ENCODE measurements at regions of chr22 and their contacts with region 1.

Region 1: GRCh38 chr22:30782613-30783012 is 87.9 kb downstream of the OSBP2 start:
- DNase-seq: no peak
- H3K4me3 ChIP-seq: no peak overlapping the region
- H3K27ac ChIP-seq: no peak overlapping the region
- H3K4me1 ChIP-seq: no peaks in the 10 kb centered on the region
- H3K27me3 ChIP-seq: no peaks in the 10 kb centered on the region
- CTCF ChIP-seq: no peak

Region 2: GRCh38 chr22:30469165-30469564 is 313.4 kb before region 1 on chr22:
- CTCF ChIA-PET with region 1: no interaction called
- POLR2A ChIA-PET with region 1: no interaction called
- intact Hi-C with region 1: no loop called
- DNase-seq: no peak
- H3K4me3 ChIP-seq: no peak overlapping the region
- H3K27ac ChIP-seq: no peak overlapping the region
- H3K4me1 ChIP-seq: no peaks in the 10 kb centered on the region
- H3K27me3 ChIP-seq: no peaks in the 10 kb centered on the region
- CTCF ChIP-seq: no peak

Region 3: GRCh38 chr22:30680991-30681770 is 101.4 kb before region 1 on chr22:
- CTCF ChIA-PET with region 1: no interaction called
- POLR2A ChIA-PET with region 1: no interaction called
- intact Hi-C with region 1: no loop called
- DNase-seq: no peak
- H3K4me3 ChIP-seq: no peak overlapping the region
- H3K27ac ChIP-seq: no peak overlapping the region
- H3K4me1 ChIP-seq: no peaks in the 10 kb centered on the region
- H3K27me3 ChIP-seq: peaks cover 5% of the 10 kb centered on the region
- CTCF ChIP-seq: no peak

Region 4: GRCh38 chr22:30717331-30717921 is 65.2 kb before region 1 on chr22:
- CTCF ChIA-PET with region 1: no interaction called
- POLR2A ChIA-PET with region 1: no interaction called
- intact Hi-C with region 1: no loop called
- DNase-seq: peak; percentile 65
- H3K4me3 ChIP-seq: no peak overlapping the region
- H3K27ac ChIP-seq: no peak overlapping the region
- H3K4me1 ChIP-seq: no peaks in the 10 kb centered on the region
- H3K27me3 ChIP-seq: no peaks in the 10 kb centered on the region
- CTCF ChIP-seq: no peak

Region 5: DNA sequence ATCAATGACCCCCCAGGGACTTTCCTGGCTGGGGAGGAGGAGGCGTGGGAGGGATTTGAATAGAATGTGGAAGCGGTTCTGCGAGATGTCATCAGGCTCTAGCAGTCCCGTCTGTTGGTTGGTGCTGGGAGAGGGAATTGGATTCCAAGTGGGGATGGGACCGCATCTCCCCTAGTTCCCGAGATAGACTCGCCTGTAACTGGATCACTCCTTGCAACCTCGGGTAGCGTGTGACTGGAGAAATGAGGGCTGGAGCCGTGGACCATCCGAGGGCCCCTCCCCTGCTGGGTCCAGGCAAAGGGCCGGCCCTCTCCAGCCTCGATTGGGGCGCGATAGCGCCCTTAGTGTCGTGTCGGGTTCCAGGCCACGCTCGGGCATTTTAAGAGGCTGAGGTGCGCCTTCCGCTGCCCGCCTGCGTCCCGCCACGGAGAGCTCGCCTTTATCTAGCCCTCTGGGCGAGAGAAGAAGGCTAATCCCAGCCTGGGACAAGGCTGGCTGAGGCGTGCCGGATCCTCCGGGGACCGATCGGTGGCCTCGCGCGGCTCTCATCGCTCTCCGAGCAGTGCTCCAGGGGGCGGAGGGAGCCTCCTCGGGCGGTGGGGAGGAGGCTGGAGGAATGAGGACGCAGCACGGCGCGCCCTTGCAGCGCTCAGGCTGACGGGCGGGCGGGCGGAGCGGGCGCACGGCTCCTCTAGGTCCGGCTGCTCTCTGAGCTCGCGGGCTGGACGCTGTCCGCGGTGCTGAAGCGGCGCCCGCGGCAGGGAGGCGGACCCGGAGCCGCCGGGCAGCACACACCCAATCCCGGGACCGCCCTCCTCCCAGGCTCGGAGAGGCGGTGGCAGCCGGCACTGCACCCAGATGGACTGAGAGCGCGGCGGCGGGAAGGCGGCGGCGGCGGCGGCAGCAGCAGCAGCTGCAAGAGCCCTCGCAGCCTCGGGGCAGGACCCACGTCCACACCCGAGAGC is 19.9 kb after region 1 on chr22:
- CTCF ChIA-PET with region 1: no interaction called
- POLR2A ChIA-PET with region 1: no interaction called
- intact Hi-C with region 1: no loop called
- DNase-seq: peak; percentile 93
- H3K4me3 ChIP-seq: peak overlapping the region; percentile 24
- H3K27ac ChIP-seq: no peak overlapping the region
- H3K4me1 ChIP-seq: peaks cover 14% of the 10 kb centered on the region
- H3K27me3 ChIP-seq: peaks cover 41% of the 10 kb centered on the region
- CTCF ChIP-seq: 0 out of 2 replicates have a peak, but pooled peaks have one; percentile 22

Region 6: DNA sequence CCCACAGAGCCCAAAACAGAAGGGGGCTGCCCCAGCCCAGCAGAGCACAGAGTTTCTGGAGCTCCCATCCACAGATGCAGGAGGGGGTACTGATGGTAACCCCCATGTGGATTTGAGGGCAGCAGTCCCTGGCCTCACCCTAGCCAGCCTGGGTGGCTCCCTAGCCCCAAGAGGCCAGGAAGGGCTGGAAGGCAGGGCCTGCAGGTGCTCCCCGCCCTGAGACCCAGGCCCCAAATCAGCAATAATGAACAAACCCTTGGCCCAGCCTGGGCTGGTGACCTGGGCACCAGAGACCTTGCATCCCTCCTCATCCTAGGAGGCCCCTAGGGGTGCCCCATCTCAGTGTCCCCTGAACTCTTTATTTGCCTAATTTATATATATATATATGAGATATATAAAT is 124.3 kb after region 1 on chr22:
- CTCF ChIA-PET with region 1: interaction called, 13 read pairs
- POLR2A ChIA-PET with region 1: no interaction called
- intact Hi-C with region 1: no loop called
- DNase-seq: no peak
- H3K4me3 ChIP-seq: no peak overlapping the region
- H3K27ac ChIP-seq: no peak overlapping the region
- H3K4me1 ChIP-seq: no peaks in the 10 kb centered on the region
- H3K27me3 ChIP-seq: no peaks in the 10 kb centered on the region
- CTCF ChIP-seq: no peak